GM13976 (cell line): ENCODE measurements at regions of chr15 and their contacts with region 1.

Region 1: DNA sequence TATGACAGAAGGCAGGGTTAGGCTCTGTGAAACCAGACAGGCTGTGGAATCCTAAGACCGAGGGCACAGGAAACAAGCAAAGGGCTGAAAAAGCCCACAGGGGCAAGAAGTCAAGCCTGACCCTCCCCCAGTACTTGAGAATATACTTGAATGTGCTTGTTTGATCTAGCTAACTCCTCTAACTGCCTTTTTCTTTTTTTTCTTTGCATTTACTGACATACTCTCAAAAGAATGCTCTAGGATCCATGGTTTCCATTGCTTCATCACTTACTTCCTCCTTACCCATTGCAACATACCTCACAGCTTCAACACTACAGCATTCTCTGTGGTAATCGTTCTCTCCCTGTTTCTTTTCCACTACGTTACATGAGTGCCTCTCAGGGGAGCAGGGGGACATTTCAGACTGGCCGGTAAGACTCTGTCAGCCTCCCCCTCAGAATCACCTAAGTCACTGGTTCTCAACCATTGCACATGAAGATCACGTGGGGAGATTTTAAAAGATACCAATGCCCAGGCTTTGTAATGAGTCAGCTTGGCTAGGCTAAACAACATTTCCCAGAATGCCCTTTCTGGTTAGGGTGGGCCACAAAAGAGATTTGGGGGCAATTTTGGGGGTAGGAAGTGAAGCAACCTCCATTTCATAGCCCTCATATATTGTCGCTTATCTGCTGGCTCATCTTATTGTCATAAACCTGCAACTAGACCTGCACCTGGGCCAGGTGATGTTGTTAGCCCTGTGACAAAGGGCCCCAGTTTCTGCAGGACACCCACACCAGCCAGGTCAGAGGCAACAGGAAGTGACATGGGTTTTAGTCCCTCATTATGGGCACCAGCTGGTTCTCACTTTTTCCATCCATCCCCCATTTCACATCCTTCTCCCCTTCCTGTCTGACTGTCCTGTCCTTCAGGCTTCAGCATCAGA is 24.6 kb upstream of the RSL24D1 start:
- DNase-seq: peak; percentile 62
- CTCF ChIP-seq: no peak

Region 2: GRCh38 chr15:55270291-55270690 is 48.9 kb after region 1 on chr15:
- in situ Hi-C with region 1: loop called (anchors 5 kb)
- DNase-seq: no peak
- CTCF ChIP-seq: no peak

Region 3: DNA sequence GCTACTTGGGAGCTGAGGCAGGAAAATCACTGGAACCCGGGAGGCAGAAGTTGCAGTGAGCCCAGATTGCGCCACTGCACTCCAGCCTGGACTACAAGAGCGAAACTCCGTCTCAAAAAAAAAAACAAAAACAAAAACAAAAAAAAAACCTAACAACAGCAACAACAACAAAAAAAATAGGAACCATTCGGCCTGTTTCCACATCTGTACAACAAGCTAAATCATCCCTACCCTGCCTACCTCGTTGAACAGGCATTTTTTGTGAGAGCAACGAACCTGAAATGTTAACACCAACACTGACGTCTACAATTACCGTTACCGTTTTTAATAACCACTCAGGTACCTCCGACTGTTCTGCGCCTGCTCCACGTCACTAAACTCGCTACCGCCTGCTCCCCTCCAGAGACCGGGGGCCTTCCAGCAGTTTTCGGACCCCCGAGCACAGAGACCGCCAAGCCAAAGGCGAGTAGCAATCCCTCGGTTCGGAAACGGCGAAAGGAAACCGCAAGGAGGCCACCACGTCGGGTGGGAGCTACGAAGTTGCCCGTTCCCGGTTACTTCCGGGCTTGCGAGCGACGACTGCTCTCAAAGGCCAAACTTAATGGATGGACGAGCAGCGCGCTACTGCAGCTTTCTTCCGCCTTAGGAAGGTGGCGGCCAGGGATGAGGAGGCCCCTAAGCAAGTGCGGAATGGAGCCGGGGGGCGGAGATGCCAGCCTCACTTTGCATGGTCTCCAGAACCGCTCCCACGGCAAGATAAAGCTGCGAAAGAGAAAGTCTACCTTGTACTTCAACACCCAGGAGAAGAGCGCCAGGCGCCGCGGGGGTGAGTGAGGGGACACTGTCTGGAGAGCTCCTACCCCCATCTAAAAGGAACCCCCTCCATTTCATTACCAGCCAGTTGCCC is 97.5 kb after region 1 on chr15 and contains the starts of genes PIGB and PIGBOS1:
- in situ Hi-C with region 1: no loop called
- DNase-seq: peak; percentile 85
- CTCF ChIP-seq: no peak

Region 4: DNA sequence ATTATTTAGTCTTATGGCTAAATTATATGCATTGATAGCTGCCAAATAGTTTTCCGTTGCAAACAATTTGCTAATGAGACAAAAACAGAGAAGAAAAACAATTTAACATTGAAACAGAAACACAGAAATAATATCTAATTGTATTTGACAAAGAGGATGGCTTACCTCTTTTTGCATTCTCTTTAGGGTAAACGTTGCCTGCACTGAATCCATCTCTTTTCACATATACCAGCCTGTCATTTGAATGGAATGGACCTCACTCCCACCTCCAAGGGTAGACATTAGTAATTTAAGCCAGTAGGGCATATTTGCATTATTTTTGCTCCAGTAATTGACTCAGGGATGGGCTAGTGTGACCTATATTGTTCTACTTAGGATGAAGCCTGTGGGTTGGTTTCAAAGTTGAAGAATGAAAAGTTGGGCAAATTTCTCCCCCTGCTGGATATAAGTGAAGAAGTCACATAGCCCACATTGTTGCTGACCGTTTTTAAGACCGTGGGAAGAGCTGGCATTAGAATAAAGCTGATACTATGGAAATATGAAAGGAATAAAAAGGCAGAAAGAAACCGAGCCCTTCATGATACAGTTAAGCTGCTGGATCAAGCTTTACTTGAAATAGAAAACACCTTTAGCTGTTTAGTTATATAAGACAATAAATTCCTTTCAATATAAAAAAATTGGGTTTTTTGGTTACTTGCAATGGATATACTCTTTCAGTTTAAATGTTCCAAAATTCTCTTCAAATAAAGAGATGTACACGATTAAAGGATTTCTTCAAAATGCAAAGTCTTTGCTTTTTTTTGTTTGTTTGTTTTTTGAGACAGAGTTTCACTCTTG is 213.9 kb after region 1 on chr15:
- in situ Hi-C with region 1: loop called (anchors 10 kb)
- DNase-seq: peak; percentile 64
- CTCF ChIP-seq: peak; percentile 37